AG04450 (cell line): ENCODE measurements at regions of chr2 and their contacts with region 1.

Region 1: GRCh38 chr2:109447251-109447661 is 166.5 kb downstream of the SEPTIN10 start:
- DNase-seq: peak; percentile 93
- H3K4me3 ChIP-seq: no peak overlapping the region
- H3K27ac ChIP-seq: peak overlapping the region; percentile 96
- H3K27me3 ChIP-seq: no peaks in the 10 kb centered on the region
- CTCF ChIP-seq: no peak

Region 2: DNA sequence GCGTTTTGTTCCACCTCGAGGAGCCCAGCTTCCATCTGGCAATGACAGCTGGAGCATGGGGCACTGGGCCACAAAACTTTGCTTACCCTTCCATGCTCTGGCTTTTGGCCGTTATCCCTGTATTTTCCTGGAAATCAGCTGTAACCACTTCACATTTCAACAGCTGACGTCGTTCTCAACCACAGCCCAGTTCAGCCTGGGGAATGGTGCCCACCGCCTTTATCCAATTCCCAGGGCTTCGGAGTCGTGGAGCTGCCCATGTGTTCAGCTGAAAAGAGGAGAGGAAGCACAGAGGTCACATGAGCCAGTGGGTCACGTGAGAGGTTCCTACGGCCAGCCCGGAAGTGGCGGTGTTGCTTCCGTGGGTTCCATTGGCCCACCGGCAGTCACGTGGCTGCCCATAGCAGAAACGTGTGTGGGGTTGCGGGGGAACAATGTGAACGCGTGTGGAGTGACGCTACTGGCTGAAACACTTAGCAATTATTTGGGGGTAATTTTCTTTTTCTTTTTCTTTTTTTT is 441.5 kb before region 1 on chr2:
- CTCF ChIA-PET with region 1: no interaction called
- POLR2A ChIA-PET with region 1: interaction called, 11 read pairs
- DNase-seq: no peak
- H3K4me3 ChIP-seq: no peak overlapping the region
- H3K27ac ChIP-seq: no peak overlapping the region
- H3K27me3 ChIP-seq: peaks cover 20% of the 10 kb centered on the region
- CTCF ChIP-seq: no peak

Region 3: GRCh38 chr2:109457794-109458193 is 10.5 kb after region 1 on chr2:
- CTCF ChIA-PET with region 1: no interaction called
- POLR2A ChIA-PET with region 1: no interaction called
- DNase-seq: no peak
- H3K4me3 ChIP-seq: no peak overlapping the region
- H3K27ac ChIP-seq: no peak overlapping the region
- H3K27me3 ChIP-seq: no peaks in the 10 kb centered on the region
- CTCF ChIP-seq: peak; percentile 5; the same call in 1 of the 2 replicates